ENCODE measurements at regions of chr4 and their contacts with region 1.

Region 1: GRCh38 chr4:157045507-157046127 is 30.3 kb upstream of the GLRB start:
- DNase-seq: peak; percentile 31 to 48
- H3K4me3 ChIP-seq: no peak overlapping the region
- H3K4me3 Mint-ChIP-seq: no peak overlapping the region
- H3K27ac Mint-ChIP-seq: no peak overlapping the region
- H3K4me1 ChIP-seq: no peaks in the 10 kb centered on the region
- H3K4me1 Mint-ChIP-seq: no peaks in the 10 kb centered on the region
- H3K27me3 ChIP-seq: no peaks in the 10 kb centered on the region
- H3K27me3 Mint-ChIP-seq: peaks cover 7% of the 10 kb centered on the region
- CTCF ChIP-seq: peak; percentile 56 to 75

Region 2: DNA sequence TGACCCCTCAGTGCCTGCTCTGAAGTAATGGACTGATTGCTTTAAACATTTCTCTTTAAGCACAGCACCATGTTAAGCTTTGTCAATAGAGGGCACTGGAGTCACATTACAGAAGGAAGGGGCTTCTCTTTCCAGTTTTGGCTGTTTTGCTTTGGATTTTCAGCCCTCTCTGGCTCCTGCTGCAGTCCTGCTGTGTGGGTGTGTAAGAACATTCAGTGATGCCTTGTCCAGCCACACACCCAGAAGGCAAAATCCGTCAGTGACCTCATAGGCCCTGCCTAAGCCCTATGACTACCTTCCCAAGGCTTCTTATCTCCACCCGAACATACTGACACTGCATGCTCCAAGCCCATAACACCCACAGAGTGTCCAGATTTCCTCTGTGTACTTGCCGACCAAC is 876.6 kb before region 1 on chr4:
- CTCF ChIA-PET with region 1: no interaction called
- POLR2A ChIA-PET with region 1: no interaction called
- intact Hi-C with region 1: loop called (anchors 2 kb)
- DNase-seq: peak; percentile 38 to 43
- H3K4me3 ChIP-seq: no peak overlapping the region
- H3K4me3 Mint-ChIP-seq: no peak overlapping the region
- H3K27ac Mint-ChIP-seq: no peak overlapping the region
- H3K4me1 ChIP-seq: no peaks in the 10 kb centered on the region
- H3K4me1 Mint-ChIP-seq: peaks cover 8% of the 10 kb centered on the region
- H3K27me3 ChIP-seq: no peaks in the 10 kb centered on the region
- H3K27me3 Mint-ChIP-seq: peaks cover 7% of the 10 kb centered on the region
- CTCF ChIP-seq: peak; percentile 42 to 60

Region 3: GRCh38 chr4:156475322-156475721 is 570.3 kb before region 1 on chr4:
- CTCF ChIA-PET with region 1: interaction called, 12 read pairs
- POLR2A ChIA-PET with region 1: no interaction called
- intact Hi-C with region 1: loop called (anchors 1 kb)
- DNase-seq: peak in 1 of 2 experiments; percentile 5
- H3K4me3 ChIP-seq: no peak overlapping the region
- H3K4me3 Mint-ChIP-seq: no peak overlapping the region
- H3K27ac Mint-ChIP-seq: no peak overlapping the region
- H3K4me1 ChIP-seq: no peaks in the 10 kb centered on the region
- H3K4me1 Mint-ChIP-seq: no peaks in the 10 kb centered on the region
- H3K27me3 ChIP-seq: no peaks in the 10 kb centered on the region
- H3K27me3 Mint-ChIP-seq: no peaks in the 10 kb centered on the region
- CTCF ChIP-seq: peak; percentile 29 to 46

Region 4: GRCh38 chr4:156858071-156858470 is 187.5 kb before region 1 on chr4:
- CTCF ChIA-PET with region 1: no interaction called
- POLR2A ChIA-PET with region 1: no interaction called
- intact Hi-C with region 1: loop called (anchors 10 kb)
- DNase-seq: no peak
- H3K4me3 ChIP-seq: no peak overlapping the region
- H3K4me3 Mint-ChIP-seq: no peak overlapping the region
- H3K27ac Mint-ChIP-seq: no peak overlapping the region
- H3K4me1 ChIP-seq: no peaks in the 10 kb centered on the region
- H3K4me1 Mint-ChIP-seq: no peaks in the 10 kb centered on the region
- H3K27me3 ChIP-seq: no peaks in the 10 kb centered on the region
- H3K27me3 Mint-ChIP-seq: no peaks in the 10 kb centered on the region
- CTCF ChIP-seq: no peak

Region 5: DNA sequence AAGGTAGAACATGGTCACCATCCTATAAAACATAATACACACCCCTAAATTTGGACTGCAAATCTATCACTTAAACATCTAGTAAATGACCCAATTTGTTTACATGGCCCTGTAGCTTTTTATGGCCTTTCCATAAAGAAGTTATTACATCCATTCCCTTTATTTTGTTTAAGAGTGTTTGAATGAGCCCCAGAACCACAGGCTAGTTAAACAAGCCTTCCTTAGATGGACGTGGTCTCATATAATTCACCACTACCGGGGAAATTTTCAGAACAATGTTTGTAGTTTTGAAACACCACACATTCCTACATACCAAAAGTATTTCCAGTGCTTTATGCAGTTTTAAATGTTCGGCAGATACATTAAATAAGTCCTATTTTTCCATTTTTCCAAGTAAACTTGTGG is 86.3 kb before region 1 on chr4:
- CTCF ChIA-PET with region 1: no interaction called
- POLR2A ChIA-PET with region 1: no interaction called
- intact Hi-C with region 1: no loop called
- DNase-seq: no peak
- H3K4me3 ChIP-seq: no peak overlapping the region
- H3K4me3 Mint-ChIP-seq: no peak overlapping the region
- H3K27ac Mint-ChIP-seq: no peak overlapping the region
- H3K4me1 ChIP-seq: no peaks in the 10 kb centered on the region
- H3K4me1 Mint-ChIP-seq: peaks cover 26% of the 10 kb centered on the region
- H3K27me3 ChIP-seq: no peaks in the 10 kb centered on the region
- H3K27me3 Mint-ChIP-seq: no peaks in the 10 kb centered on the region
- CTCF ChIP-seq: no peak

Region 6: DNA sequence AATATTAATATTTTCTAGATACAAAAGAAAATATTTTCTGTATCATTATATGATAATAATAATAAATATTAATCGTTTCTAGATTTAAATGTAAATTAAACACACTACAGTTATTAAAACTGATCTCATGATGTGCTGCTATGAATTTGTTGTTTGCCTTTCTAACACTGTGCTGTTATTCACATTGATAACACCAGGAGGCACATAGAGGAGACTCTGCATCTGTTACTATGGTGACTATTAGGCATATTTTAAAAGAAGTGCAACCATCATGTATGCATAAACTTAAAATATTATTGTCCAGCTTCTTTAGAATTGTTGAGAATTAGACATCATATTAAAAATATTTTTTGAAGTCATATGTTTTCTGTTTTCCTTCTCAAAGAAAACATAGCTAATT is 62.3 kb before region 1 on chr4:
- CTCF ChIA-PET with region 1: interaction called, 7 read pairs
- POLR2A ChIA-PET with region 1: no interaction called
- intact Hi-C with region 1: loop called (anchors 1 kb)
- DNase-seq: no peak
- H3K4me3 ChIP-seq: no peak overlapping the region
- H3K4me3 Mint-ChIP-seq: no peak overlapping the region
- H3K27ac Mint-ChIP-seq: no peak overlapping the region
- H3K4me1 ChIP-seq: no peaks in the 10 kb centered on the region
- H3K4me1 Mint-ChIP-seq: no peaks in the 10 kb centered on the region
- H3K27me3 ChIP-seq: no peaks in the 10 kb centered on the region
- H3K27me3 Mint-ChIP-seq: no peaks in the 10 kb centered on the region
- CTCF ChIP-seq: peak; percentile 22 to 35

Region 7: GRCh38 chr4:157128395-157128794 is 82.8 kb after region 1 on chr4:
- CTCF ChIA-PET with region 1: no interaction called
- POLR2A ChIA-PET with region 1: no interaction called
- intact Hi-C with region 1: loop called (anchors 1 kb)
- DNase-seq: peak in 1 of 2 experiments; percentile 10
- H3K4me3 ChIP-seq: no peak overlapping the region
- H3K4me3 Mint-ChIP-seq: no peak overlapping the region
- H3K27ac Mint-ChIP-seq: no peak overlapping the region
- H3K4me1 ChIP-seq: no peaks in the 10 kb centered on the region
- H3K4me1 Mint-ChIP-seq: no peaks in the 10 kb centered on the region
- H3K27me3 ChIP-seq: no peaks in the 10 kb centered on the region
- H3K27me3 Mint-ChIP-seq: no peaks in the 10 kb centered on the region
- CTCF ChIP-seq: peak in 1 of 2 experiments; percentile 15

Measured in Caco-2 (cell line).